ENCODE measurements at regions of chr6 and their contacts with region 1.

Region 1: DNA sequence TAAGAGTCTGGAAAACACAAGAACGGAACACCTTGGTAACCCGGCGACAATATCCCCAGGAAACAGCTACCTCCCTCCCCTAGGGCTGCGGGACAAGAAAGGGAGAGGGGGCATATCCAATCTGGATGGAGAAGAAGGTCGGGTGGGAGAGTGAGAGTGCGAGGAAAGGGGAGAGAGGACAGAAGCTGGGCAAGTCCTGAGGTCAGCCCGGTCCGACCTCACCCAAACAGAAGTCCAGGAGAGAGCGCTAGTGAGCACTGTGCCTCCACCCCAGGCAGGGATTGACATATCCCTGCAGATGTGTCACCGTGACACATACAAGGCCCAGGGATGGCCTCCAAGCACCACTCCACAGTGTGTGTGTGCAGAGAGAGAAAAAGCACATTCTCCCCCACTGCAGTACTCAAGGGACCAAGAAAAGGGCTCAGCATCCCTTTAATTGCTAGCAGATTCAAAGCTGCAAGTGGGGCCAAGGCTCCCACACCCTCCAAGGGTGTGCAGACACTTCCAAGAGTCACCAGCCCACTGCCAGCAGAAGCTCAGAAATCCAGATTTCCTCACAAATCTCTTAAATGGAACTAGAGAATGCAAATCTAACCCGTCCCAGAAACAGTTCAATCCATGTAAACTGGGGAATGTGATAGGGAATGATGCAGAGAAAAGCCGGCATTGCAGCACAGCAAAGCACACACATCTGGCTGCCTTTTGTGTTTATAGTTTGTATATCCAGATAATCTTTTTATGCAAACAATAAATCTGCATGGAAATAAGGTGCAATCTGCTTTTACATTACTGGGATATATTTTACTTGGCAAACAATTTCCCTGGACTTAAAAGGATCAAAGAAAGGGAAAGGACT is 3.1 kb downstream of the PXDC1 start:
- DNase-seq: no peak
- H3K4me3 ChIP-seq: peak overlapping the region; percentile 90
- H3K27ac ChIP-seq: peak overlapping the region; percentile 68
- H3K27me3 ChIP-seq: no peaks in the 10 kb centered on the region
- CTCF ChIP-seq: peak; percentile 76

Region 2: GRCh38 chr6:3724451-3725108 is 23.9 kb before region 1 on chr6:
- CTCF ChIA-PET with region 1: no interaction called
- POLR2A ChIA-PET with region 1: no interaction called
- DNase-seq: no peak
- H3K4me3 ChIP-seq: no peak overlapping the region
- H3K27ac ChIP-seq: no peak overlapping the region
- H3K27me3 ChIP-seq: no peaks in the 10 kb centered on the region
- CTCF ChIP-seq: no peak

Region 3: GRCh38 chr6:3808759-3809514 is 60.5 kb after region 1 on chr6:
- CTCF ChIA-PET with region 1: interaction called, 3 read pairs
- POLR2A ChIA-PET with region 1: interaction called, 11 read pairs
- DNase-seq: peak; percentile 71
- H3K4me3 ChIP-seq: no peak overlapping the region
- H3K27ac ChIP-seq: peak overlapping the region; percentile 78
- H3K27me3 ChIP-seq: no peaks in the 10 kb centered on the region
- CTCF ChIP-seq: 0 out of 2 replicates have a peak, but pooled peaks have one; percentile 14

Region 4: DNA sequence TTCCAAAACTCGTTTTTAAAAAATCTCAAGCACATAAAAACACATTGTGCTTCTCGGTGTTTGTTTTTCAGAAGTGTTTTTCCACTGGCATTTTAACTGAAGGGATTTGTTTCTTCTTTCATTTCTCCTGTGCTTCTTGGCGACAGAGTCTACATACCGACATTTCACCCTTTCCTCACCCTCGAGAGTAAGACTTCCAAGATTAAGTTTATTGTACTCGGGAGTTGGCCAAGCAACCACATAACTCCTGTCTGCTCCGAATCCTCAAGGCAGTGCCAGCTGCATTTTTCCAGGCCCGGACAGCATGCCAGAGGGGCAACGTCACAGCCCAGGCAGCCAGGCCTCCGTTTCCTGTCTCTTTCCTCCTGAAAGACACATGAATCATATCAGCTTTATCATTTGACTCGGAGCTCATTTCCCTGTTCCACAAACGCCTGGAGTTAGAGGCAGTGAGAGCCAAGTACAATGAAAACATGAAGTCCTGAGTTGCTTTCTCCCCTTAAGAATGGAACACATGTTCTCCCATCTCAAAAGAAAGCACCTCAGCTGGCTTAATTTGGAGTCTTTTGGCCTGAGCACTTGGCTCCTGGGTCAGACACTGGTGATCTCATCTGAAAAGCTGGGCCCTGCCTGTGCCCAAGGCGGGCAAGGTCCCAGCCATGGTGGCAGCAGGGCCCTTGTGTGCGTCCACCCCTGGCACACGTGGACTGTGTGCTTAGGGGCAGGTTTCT is 77.6 kb after region 1 on chr6:
- CTCF ChIA-PET with region 1: interaction called, 11 read pairs
- POLR2A ChIA-PET with region 1: interaction called, 5 read pairs
- DNase-seq: peak; percentile 90
- H3K4me3 ChIP-seq: no peak overlapping the region
- H3K27ac ChIP-seq: peak overlapping the region; percentile 96
- H3K27me3 ChIP-seq: no peaks in the 10 kb centered on the region
- CTCF ChIP-seq: no peak

Region 5: GRCh38 chr6:3887150-3887700 is 138.8 kb after region 1 on chr6:
- CTCF ChIA-PET with region 1: interaction called, 34 read pairs
- POLR2A ChIA-PET with region 1: interaction called, 6 read pairs
- DNase-seq: no peak
- H3K4me3 ChIP-seq: no peak overlapping the region
- H3K27ac ChIP-seq: no peak overlapping the region
- H3K27me3 ChIP-seq: no peaks in the 10 kb centered on the region
- CTCF ChIP-seq: peak; percentile 65

Region 6: DNA sequence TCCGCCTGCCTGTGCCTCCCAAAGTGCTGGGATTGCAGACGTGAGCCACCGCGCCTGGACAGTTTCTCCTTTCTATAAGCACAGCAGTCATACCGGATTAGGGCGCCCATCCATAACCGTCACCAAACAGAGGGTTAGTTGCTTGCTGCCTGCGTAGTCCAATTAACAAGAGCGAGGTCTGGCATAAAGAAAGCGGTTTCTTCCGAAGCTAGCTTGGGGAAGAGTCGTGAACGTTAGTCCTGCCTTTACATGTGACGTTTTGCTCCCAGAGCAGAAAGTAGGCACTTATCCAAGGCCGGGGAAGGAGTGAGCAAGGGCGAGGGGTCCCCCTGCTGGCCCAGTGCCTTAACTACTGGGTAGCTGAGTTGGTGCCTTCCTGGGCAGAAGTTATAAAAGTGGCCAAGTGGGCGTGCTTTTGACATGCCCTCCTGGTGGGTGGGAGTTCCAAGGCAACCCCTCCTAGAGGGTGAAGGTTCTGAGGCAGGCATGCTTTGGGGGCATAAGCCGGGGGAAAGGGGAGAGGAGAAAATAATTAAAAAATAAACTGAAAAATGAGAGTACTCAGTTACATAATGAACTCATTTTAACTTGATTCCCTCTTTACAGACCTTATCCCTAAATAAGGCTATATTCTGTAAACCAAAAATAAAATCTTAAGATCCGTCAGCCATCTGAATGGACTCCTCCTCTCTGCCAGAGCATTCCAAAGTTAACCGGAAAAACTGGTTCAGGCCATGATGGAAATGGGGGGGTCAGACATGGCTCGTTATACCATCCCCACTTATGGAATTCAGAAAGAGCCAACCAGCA is 242.5 kb after region 1 on chr6:
- CTCF ChIA-PET with region 1: interaction called, 16 read pairs
- POLR2A ChIA-PET with region 1: interaction called, 4 read pairs
- DNase-seq: peak; percentile 76
- H3K4me3 ChIP-seq: no peak overlapping the region
- H3K27ac ChIP-seq: no peak overlapping the region
- H3K27me3 ChIP-seq: no peaks in the 10 kb centered on the region
- CTCF ChIP-seq: peak; percentile 97

Region 7: GRCh38 chr6:4008324-4009047 is 260.0 kb after region 1 on chr6:
- CTCF ChIA-PET with region 1: interaction called, 11 read pairs
- POLR2A ChIA-PET with region 1: no interaction called
- DNase-seq: peak; percentile 59
- H3K4me3 ChIP-seq: no peak overlapping the region
- H3K27ac ChIP-seq: no peak overlapping the region
- H3K27me3 ChIP-seq: no peaks in the 10 kb centered on the region
- CTCF ChIP-seq: peak; percentile 72